Thyroid gland (tissue), 4 donors: ENCODE measurements at regions of chr2 and their contacts with region 1.

Region 1: DNA sequence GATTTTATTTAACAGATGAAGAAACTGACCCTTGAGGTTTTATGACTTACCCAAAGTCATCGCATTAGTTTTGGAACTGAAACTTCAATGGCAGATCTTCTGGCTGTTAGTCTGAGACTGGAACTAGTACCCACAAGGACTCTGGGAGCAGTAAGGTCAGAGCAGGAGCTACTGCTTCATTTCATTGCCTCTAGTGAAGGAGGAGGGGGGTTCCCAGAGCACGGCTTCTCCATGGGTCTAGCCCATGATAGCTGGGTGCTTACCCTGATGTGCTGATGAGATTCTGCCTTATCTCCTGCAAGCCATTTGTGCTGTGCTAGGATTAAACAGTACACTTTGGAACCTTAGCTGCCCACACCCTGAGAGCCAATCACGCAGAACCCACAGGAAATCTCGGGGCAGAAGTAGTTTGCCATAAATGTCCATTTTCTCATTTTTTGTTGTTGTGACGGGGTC is 5.4 kb upstream of the RNASEH1 start:
- DNase-seq: no peak
- H3K4me3 ChIP-seq: no peak overlapping the region
- H3K27ac ChIP-seq: no peak overlapping the region
- H3K4me1 ChIP-seq: peaks cover 7 to 8% of the 10 kb centered on the region in 2 donors
- H3K27me3 ChIP-seq: no peaks in the 10 kb centered on the region
- CTCF ChIP-seq: no peak
- POLR2A ChIP-seq: no peak

Region 2: GRCh38 chr2:3519255-3520205 is 44.0 kb before region 1 on chr2 and contains the start of gene ADI1:
- intact Hi-C with region 1: loop called (anchors 5 kb)
- DNase-seq: peak; percentile 64 to 76
- H3K4me3 ChIP-seq: peak within 1 kb of the TSS; percentile 21 to 94 (median 60)
- H3K27ac ChIP-seq: peak within 1 kb of the TSS; percentile 93 to 99 (median 98)
- H3K4me1 ChIP-seq: peaks cover 19 to 23% of the 10 kb centered on the region in 2 donors
- H3K27me3 ChIP-seq: no peaks in the 10 kb centered on the region
- CTCF ChIP-seq: no peak
- POLR2A ChIP-seq: peak; percentile 72 to 77
- total RNA-seq, gene ADI1: 35.9 to 65.1 (median 59.2) TPM